ENCODE measurements at regions of chr20 and their contacts with region 1.

Region 1: GRCh38 chr20:2524709-2525506 is 11.5 kb upstream of the TMC2 start:
- DNase-seq: peak in 1 of 2 donors; percentile 22
- H3K4me3 ChIP-seq: peak overlapping the region; percentile 80 to 98 (median 93)
- H3K27ac ChIP-seq: peak overlapping the region; percentile 94 to 98
- H3K4me1 ChIP-seq: no peaks in the 10 kb centered on the region
- H3K27me3 ChIP-seq: no peaks in the 10 kb centered on the region
- CTCF ChIP-seq: no peak
- POLR2A ChIP-seq: no peak

Region 2: GRCh38 chr20:2544211-2544610 is 19.3 kb after region 1 on chr20:
- intact Hi-C with region 1: no loop called
- DNase-seq: no peak
- H3K4me3 ChIP-seq: no peak overlapping the region
- H3K27ac ChIP-seq: no peak overlapping the region
- H3K4me1 ChIP-seq: no peaks in the 10 kb centered on the region
- H3K27me3 ChIP-seq: peaks cover 0 to 5% of the 10 kb centered on the region in 2 donors
- CTCF ChIP-seq: no peak
- POLR2A ChIP-seq: no peak

Region 3: DNA sequence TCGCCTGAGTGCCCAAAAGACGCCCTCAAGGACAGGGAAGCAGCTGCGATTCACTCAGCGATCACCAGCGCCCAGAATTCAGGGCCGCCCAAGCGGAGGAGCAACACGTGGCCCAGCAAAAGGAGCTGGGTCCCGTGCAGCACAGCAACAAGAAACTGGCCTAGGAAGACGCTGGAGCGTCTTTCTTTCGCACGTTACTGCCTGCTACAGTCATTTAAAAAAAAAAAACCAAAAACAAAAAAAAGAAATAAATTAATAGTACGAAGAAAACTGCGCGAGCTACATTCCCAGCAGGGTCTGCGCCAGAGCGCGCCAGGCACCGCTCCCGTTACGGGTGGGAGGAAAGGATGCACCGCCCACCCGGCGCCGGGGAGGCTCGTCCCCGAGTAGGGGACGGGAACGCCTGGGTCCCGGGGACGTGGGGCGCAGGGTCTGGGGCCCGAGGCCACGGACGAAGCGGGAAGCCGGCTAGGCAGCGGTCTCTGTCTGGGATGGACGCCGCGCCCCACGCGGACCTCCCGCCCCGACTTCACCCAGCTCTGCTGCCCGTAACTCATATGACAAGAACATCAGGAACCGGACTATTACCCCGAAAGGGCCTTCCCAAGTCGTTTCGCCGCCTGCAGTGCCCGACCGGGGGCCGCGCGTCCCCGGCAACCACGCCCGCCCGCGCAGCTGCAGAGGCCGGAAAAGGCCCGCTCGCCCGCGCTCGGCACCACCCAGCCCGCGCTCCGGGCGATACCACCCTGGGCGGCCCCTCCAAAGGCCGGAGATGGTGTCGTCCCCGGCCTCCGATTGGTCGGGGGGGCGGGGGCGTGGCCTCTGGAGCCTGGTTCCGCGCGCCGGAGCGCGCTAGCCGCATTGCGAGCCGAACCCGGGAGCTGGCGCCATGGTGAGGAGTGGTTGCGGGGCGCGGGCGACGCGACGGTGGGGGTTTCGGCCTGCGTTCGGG is 127.1 kb after region 1 on chr20 and contains the start of gene NOP56:
- intact Hi-C with region 1: loop called (anchors 5 kb)
- DNase-seq: peak; percentile 87 to 88
- H3K4me3 ChIP-seq: peak within 1 kb of the TSS; percentile 88 to 92 (median 91)
- H3K27ac ChIP-seq: peak within 1 kb of the TSS; percentile 81 to 92
- H3K4me1 ChIP-seq: peaks cover 0 to 14% of the 10 kb centered on the region in 2 donors
- H3K27me3 ChIP-seq: no peaks in the 10 kb centered on the region
- CTCF ChIP-seq: no peak
- POLR2A ChIP-seq: no peak
- total RNA-seq, gene NOP56: 77.1 to 137 (median 94.8) TPM

Measured in breast epithelium (tissue), 4 donors.